ENCODE measurements at regions of chr6 and their contacts with region 1.

Region 1: DNA sequence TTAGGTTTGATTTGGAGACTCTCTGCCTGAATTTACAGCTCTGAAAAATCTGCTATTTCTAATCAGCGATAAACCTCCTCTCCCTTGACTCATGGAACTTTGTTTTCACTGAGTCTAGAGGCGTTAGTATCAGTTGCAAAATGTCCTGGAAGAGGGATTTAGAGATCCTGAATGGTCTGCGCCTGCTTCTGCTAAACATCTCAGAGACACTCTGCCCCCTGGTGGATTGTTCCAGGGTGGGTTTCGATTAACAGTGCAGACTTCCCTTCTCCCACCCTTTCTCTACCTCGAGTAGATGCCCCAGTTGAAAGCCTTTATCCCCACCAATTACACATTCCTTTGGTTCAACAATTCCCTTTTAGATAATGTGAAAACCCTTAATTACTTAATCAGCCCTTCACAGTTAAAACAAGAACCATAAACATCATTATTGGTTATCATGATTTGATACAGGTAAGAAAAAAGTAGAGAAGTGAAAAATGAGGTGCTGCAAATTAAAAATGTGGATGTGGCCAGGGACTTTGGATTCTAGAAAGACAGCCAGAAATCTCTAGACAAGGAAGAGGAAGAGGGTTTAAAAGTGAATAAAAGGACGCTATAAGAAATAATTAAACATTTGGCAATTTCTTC is 5.5 kb downstream of the HTR1B start:
- DNase-seq: peak; percentile 52
- CTCF ChIP-seq: peak; percentile 59

Region 2: GRCh38 chr6:75934643-75935472 is 1523.0 kb before region 1 on chr6:
- in situ Hi-C with region 1: loop called (anchors 25 kb)
- DNase-seq: peak; percentile 81
- CTCF ChIP-seq: peak; percentile 56

Region 3: DNA sequence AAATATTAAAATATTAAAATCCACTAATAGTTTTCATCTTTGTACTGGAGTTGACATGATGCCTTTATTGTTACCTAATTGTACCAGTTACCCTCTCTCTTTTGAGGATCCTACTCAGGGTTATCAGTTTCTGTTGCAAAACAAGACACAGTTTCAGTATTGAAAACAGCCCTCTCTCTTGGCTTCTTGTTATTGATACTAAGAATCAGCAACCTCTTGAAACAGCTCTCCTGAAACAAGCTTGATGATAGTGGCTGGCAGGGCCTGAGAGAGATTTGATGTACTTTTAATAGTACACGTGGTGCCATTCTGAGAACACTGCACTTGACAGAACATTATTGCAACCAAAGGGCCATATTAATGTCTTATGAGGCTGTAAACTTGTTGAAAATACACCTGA is 130.1 kb after region 1 on chr6:
- in situ Hi-C with region 1: no loop called
- DNase-seq: no peak
- CTCF ChIP-seq: no peak

Region 4: GRCh38 chr6:77633993-77634715 is 176.3 kb after region 1 on chr6:
- in situ Hi-C with region 1: no loop called
- DNase-seq: no peak
- CTCF ChIP-seq: no peak

Measured in GM13976 (cell line).